ENCODE measurements at regions of chr1 and their contacts with region 1.

Region 1: GRCh38 chr1:33735621-33736020 is 128.3 kb upstream of the HMGB4 start:
- DNase-seq: no peak
- H3K4me3 ChIP-seq: no peak overlapping the region
- H3K27ac ChIP-seq: no peak overlapping the region
- H3K4me1 ChIP-seq: no peaks in the 10 kb centered on the region
- H3K27me3 ChIP-seq: no peaks in the 10 kb centered on the region
- CTCF ChIP-seq: peak in 1 of 2 donors; percentile 8

Region 2: DNA sequence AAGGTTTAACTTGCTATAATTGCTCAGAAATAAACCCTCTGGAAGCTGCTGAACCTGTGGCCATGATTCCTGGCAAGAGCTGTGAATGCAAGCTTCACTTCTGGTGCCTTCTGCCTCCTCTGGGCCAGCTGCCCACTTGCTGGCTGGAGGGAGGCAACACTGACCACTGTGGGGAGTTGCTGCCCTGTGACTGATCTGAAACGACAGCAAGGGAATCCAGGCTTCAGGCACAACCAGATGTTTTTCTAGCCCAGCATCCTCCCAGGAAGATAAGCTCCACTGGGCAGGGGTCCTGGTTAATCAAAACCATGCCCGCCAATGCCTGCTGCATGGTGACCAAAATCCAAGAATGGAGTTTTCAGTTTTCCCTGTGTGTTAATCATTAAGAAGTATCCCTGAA is 51.7 kb before region 1 on chr1:
- CTCF ChIA-PET with region 1: no interaction called
- dilution Hi-C with region 1: loop called (anchors 5 kb)
- in situ Hi-C with region 1: no loop called
- intact Hi-C with region 1: no loop called
- DNase-seq: no peak
- H3K4me3 ChIP-seq: no peak overlapping the region
- H3K27ac ChIP-seq: no peak overlapping the region
- H3K4me1 ChIP-seq: no peaks in the 10 kb centered on the region
- H3K27me3 ChIP-seq: no peaks in the 10 kb centered on the region
- CTCF ChIP-seq: no peak

Region 3: DNA sequence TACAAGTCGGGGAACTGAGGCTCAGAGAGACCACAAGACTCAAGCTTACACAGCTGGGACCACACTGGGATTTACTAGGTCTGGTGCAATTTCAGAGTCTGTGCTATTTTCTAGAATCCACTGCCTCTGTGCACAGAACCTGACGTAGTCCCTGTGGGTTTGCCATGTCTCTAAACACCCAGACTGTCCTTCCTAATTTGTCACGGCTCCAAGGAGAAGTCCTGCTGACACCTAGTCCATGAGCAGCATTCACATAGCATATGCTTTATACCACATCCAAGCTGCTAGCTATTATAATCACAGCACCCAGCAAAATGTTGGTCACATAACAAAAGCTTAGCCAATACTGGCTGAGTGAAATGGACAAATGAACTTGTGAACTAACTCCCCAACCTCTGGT is 49.3 kb after region 1 on chr1:
- CTCF ChIA-PET with region 1: no interaction called
- dilution Hi-C with region 1: loop called (anchors 5 kb)
- in situ Hi-C with region 1: no loop called
- intact Hi-C with region 1: no loop called
- DNase-seq: no peak
- H3K4me3 ChIP-seq: no peak overlapping the region
- H3K27ac ChIP-seq: no peak overlapping the region
- H3K4me1 ChIP-seq: no peaks in the 10 kb centered on the region
- H3K27me3 ChIP-seq: no peaks in the 10 kb centered on the region
- CTCF ChIP-seq: no peak

Region 4: DNA sequence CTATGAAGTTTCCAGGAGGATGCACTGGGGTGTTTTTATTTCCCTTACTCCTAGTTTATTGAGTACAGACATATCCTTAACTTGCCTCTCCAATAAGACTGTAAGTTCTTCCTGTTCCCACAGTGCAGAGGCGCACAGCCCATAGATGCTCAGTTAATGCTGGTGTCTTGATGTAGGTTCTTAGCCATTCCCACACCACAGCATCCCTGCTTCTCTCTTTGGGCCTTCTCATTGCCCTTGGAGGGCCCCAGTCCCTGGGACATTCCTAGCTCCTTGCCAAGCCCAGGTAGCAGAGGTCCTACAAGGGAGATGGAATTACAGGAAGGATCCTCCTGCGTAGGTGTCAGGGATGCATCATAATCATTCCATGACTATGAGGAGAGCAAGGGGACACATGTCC is 66.6 kb after region 1 on chr1:
- CTCF ChIA-PET with region 1: no interaction called
- dilution Hi-C with region 1: loop called (anchors 10 kb)
- in situ Hi-C with region 1: no loop called
- intact Hi-C with region 1: no loop called
- DNase-seq: no peak
- H3K4me3 ChIP-seq: no peak overlapping the region
- H3K27ac ChIP-seq: no peak overlapping the region
- H3K4me1 ChIP-seq: no peaks in the 10 kb centered on the region
- H3K27me3 ChIP-seq: no peaks in the 10 kb centered on the region
- CTCF ChIP-seq: no peak

Region 5: DNA sequence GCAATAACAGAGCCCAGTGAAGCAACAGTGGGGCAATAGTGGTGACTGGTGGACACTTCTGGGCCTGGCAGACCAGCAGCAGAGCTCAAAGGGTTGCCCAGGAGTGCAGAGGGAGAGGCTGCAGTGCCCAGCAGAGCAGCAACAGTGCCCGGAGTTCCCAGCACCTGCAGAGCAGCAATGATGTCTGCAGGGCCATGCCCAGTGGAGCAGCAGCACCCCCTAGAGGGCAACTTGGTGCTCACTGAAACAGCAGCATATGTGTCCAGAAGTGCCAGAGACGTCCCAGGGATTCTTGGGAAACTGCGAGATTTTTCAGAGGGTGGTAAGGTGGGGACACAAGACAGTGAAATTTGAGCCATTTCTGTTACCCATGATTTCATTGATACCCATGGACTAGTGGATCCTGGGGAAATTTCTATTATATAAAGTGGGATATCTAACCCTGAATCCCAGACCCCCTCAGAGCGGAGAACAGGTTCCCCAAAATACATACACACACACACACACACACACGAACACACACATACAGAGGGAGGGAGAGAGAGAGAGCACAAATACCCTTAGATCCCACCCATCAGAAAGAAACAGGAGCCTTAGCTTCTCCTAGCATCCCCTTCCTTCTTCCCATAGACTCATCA is 862.4 kb after region 1 on chr1:
- CTCF ChIA-PET with region 1: no interaction called
- dilution Hi-C with region 1: no loop called
- in situ Hi-C with region 1: no loop called
- intact Hi-C with region 1: loop called (anchors 1 kb)
- DNase-seq: peak; percentile 42
- H3K4me3 ChIP-seq: no peak overlapping the region
- H3K27ac ChIP-seq: no peak overlapping the region
- H3K4me1 ChIP-seq: no peaks in the 10 kb centered on the region
- H3K27me3 ChIP-seq: no peaks in the 10 kb centered on the region
- CTCF ChIP-seq: peak; percentile 91 to 95

Measured in mammary epithelial cell (primary cell).